Heart right ventricle (tissue), 16 donors: ENCODE measurements at regions of chr2 and their contacts with region 1.

Region 1: DNA sequence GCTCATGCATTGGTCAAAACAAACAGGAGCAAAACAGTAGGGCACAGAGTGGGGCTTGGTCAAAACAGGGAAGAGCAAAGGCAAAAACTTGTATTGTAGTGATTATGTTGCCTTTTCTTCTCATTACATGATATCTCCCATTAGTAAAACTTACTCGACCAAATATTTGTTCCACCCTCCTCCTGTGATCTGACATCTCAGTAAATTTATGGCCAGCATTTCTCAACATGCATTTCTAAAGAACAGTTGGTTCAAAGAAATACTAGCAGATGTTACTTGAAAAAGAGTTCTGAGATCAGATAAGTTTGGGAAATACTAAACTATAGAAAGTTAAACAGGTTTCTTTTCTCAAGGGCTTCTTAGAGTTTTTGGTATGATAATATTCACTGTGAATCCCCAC is 423.1 kb downstream of the FIGN start:
- DNase-seq: no peak
- ATAC-seq: no peak
- H3K4me3 ChIP-seq: no peak overlapping the region
- H3K27ac ChIP-seq: no peak overlapping the region
- H3K4me1 ChIP-seq: no peaks in the 10 kb centered on the region
- H3K27me3 ChIP-seq: no peaks in the 10 kb centered on the region
- CTCF ChIP-seq: no peak

Region 2: DNA sequence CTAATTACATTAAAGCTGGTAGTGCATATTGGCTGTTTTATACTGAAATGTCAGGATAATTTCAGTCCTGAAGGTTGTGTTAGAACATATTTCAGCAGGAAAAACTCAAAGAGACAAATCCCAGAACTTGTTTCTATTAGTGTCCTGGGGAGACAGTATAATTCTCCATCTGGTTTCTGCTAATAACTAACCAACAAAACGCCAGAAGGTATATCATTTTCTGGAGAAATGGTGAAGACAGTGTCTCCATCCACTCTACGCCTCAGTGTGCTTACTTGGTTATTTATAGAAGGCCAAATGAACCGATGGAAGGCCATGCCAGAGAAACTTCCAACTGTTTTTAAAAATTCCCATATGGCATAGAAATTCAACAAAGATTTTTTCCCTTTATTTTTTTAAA is 927.2 kb before region 1 on chr2:
- intact Hi-C with region 1: loop called in 1 of 10 experiments (anchors 5 kb)
- DNase-seq: no peak
- ATAC-seq: no peak
- H3K4me3 ChIP-seq: no peak overlapping the region
- H3K27ac ChIP-seq: no peak overlapping the region
- H3K4me1 ChIP-seq: peaks cover 0 to 28% (median 4%) of the 10 kb centered on the region in 9 donors
- H3K27me3 ChIP-seq: no peaks in the 10 kb centered on the region
- CTCF ChIP-seq: no peak